Activated CD4-positive, alpha-beta T cell treated with anti-CD3 and anti-CD28 coated beads, Interleukin-2, amount 10 ng/mL, durations not matched to agents 24 days and 14 days (primary cell): ENCODE measurements at regions of chr6 and their contacts with region 1.

Region 1: DNA sequence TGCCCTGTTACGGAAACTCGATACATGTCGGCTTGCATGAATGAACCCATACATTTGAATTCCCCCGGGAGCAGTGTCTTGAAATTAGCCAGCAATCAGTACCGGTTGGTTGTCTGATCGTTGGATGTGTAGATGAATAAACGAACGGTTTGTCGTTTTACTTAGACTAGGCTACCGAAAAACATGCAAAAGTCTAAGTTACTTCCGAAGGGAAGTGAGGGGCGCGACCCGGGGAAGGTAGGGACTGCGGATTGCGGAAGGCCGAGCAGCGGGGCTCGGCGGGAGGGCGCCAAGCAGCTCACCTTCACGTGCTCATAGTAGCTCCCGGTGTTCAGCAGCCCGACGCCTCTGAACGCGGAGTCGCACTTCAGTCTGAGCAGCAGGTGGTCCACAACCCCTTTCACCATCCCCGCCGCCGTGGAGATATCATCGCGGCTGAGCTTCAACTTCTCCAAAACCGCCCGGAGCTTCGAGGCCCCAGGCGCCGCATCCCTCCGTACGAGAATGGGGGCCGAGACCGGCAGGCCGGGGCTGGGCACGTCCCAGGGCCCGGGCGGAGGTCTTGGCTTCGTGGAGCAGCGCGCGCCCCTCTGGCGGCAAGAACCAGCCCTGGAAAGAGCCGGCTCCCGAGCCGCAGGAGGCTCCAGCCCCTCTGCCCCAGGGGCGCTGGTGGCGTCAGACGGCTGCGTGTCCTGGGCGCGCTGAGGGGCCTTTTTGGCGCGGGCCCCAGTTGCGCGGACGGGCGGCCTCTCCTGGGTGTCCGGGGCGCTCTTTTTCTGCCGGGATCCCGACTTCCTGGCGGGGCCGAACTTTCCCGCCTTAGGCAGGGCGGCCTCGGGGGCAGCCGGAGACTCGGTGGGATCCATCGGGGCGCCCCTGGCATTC is 632 bp downstream of the CGAS start:
- DNase-seq: peak; percentile 83
- H3K4me3 Mint-ChIP-seq: peak overlapping the region; percentile 90
- H3K27ac Mint-ChIP-seq: peak overlapping the region; percentile 89
- H3K4me1 Mint-ChIP-seq: peaks cover 22% of the 10 kb centered on the region
- H3K27me3 Mint-ChIP-seq: no peaks in the 10 kb centered on the region

Region 2: GRCh38 chr6:73624896-73625295 is 173.4 kb after region 1 on chr6:
- intact Hi-C with region 1: no loop called
- DNase-seq: no peak
- H3K4me3 Mint-ChIP-seq: no peak overlapping the region
- H3K27ac Mint-ChIP-seq: no peak overlapping the region
- H3K4me1 Mint-ChIP-seq: peaks cover 4% of the 10 kb centered on the region
- H3K27me3 Mint-ChIP-seq: no peaks in the 10 kb centered on the region

Region 3: GRCh38 chr6:73722318-73723060 is 271.0 kb after region 1 on chr6:
- intact Hi-C with region 1: loop called (anchors 10 kb)
- DNase-seq: peak; percentile 75
- H3K4me3 Mint-ChIP-seq: peak overlapping the region; percentile 68
- H3K27ac Mint-ChIP-seq: peak overlapping the region; percentile 87
- H3K4me1 Mint-ChIP-seq: peaks cover 39% of the 10 kb centered on the region
- H3K27me3 Mint-ChIP-seq: no peaks in the 10 kb centered on the region